ENCODE measurements at regions of chr19 and their contacts with region 1.

Region 1: DNA sequence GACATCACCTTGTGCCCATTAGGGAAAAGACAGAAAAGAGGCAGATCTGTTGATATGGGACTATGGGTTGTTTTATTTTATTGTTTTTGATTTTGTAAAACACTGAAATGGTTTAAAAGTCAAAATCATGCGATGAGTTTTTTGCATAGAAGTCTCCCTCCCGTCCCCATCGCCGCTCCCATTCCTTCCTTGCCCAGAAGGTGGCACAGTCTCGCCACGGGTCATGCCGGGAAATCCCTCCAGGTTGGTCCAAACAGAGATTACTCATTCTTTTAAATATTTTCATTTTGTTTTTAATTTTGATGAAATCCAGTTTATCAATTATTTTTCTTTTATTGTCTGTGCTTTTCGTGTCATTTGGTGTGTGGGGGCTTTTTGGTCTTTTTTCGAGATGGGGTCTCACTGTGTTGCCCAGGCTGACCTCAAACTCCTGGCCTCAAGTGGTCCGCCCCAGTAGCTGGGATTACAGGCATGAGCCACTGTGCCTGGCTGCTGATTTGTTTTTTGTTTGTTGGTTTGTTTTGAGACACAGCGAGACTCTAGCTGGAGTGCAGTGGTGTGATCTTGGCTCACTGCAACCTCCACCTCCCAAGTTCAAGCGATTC is 9.2 kb downstream of the PGPEP1 start:
- DNase-seq: peak; percentile 88

Region 2: GRCh38 chr19:18401580-18402112 is 52.0 kb after region 1 on chr19:
- intact Hi-C with region 1: loop called in 1 of 2 experiments (anchors 10 kb)
- DNase-seq: peak; percentile 92

Measured in posterior vena cava (tissue), 2 donors.